ENCODE measurements at regions of chr2 and their contacts with region 1.

Region 1: GRCh38 chr2:152025678-152026287 is 73.1 kb downstream of the CACNB4 start:
- H3K4me3 ChIP-seq: peak overlapping the region; percentile 39
- H3K27ac ChIP-seq: no peak overlapping the region
- H3K4me1 ChIP-seq: peaks cover 5% of the 10 kb centered on the region
- CTCF ChIP-seq: peak; percentile 90

Region 2: GRCh38 chr2:151984424-151985083 is 41.2 kb before region 1 on chr2:
- CTCF ChIA-PET with region 1: interaction called, 10 read pairs
- POLR2A ChIA-PET with region 1: no interaction called
- H3K4me3 ChIP-seq: no peak overlapping the region
- H3K27ac ChIP-seq: no peak overlapping the region
- H3K4me1 ChIP-seq: no peaks in the 10 kb centered on the region
- CTCF ChIP-seq: no peak

Region 3: GRCh38 chr2:152012697-152013096 is 13.1 kb before region 1 on chr2:
- CTCF ChIA-PET with region 1: interaction called, 47 read pairs
- POLR2A ChIA-PET with region 1: no interaction called
- H3K4me3 ChIP-seq: no peak overlapping the region
- H3K27ac ChIP-seq: no peak overlapping the region
- H3K4me1 ChIP-seq: no peaks in the 10 kb centered on the region
- CTCF ChIP-seq: no peak

Region 4: DNA sequence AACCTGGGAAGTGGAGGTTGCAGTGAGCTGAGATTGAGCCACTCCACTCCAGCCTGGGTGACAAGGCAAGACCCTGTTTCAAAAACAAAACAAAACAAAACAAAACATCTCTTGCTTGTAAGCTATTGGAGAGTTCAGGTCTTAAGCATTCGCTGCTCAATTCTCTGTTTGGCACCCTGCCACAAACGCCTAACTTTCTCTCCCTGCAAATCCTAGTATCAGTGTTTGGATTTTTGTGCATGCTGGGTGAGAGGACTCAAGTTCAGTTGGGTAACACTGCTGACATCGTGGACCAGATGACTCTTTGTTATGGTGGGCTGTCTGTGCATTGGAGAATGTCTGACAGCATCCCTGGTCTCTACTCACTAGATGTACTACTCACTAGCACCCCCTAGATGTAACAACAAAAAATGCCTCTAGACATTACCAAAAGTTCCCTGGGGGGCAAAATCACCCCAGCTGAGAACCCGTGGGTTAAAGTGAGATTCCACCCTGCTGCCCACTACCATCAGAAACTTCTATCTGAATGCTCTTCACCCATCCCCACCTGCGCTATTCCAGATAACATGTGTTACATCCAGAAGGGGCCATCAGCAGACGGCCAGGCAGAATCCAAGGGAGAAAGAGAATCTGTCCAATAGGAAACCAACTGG is 22.2 kb after region 1 on chr2:
- CTCF ChIA-PET with region 1: interaction called, 10 read pairs
- POLR2A ChIA-PET with region 1: no interaction called
- H3K4me3 ChIP-seq: no peak overlapping the region
- H3K27ac ChIP-seq: no peak overlapping the region
- H3K4me1 ChIP-seq: no peaks in the 10 kb centered on the region
- CTCF ChIP-seq: no peak

Region 5: GRCh38 chr2:152186262-152186661 is 160.5 kb after region 1 on chr2:
- CTCF ChIA-PET with region 1: no interaction called
- POLR2A ChIA-PET with region 1: no interaction called
- H3K4me3 ChIP-seq: no peak overlapping the region
- H3K27ac ChIP-seq: no peak overlapping the region
- H3K4me1 ChIP-seq: no peaks in the 10 kb centered on the region
- CTCF ChIP-seq: no peak

Region 6: GRCh38 chr2:152222975-152223637 is 197.3 kb after region 1 on chr2:
- CTCF ChIA-PET with region 1: no interaction called
- POLR2A ChIA-PET with region 1: no interaction called
- H3K4me3 ChIP-seq: no peak overlapping the region
- H3K27ac ChIP-seq: peak overlapping the region; percentile 34; the same call in 1 of the 2 replicates
- H3K4me1 ChIP-seq: peaks cover 13% of the 10 kb centered on the region
- CTCF ChIP-seq: no peak

Measured in HEK293 (cell line).